ENCODE measurements at regions of chr17 and their contacts with region 1.

Region 1: DNA sequence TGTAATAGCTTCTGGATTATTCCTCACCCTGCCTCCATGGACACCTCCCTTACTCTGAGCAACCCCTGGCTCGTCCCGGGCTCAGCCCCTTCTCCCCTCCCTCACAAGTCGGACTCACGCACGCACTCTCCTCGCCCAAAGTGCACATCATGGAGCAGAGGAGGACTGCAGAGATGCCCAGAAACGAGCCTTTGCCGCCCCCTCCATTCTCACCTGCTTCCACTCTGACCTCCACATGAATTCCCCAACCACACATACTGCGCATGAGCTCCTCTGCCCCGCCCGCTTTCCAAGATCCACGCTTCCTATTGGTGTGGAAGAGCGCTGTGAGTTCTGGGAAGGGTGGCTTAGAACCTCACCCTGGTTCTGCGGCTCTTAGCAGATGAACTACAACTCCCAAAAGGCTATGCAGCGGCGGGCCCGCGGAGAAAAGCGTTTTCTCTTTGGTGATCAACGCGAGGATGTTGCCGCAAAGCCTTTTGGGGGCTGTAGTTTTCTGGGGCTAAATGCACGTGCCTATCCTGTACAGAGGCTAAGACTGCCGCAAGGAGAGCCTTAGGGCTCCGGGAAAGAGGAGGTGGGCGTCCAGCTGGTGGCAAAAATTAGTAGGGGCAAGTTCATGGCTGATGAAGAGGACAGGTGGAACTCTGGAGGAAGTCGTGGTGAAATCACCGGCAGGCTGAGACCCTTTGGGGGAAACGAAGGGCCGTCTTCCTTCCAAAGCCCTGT is at the start of gene PHB1:
- DNase-seq: peak; percentile 75 to 98 (median 93)
- ATAC-seq: peak; percentile 99
- H3K4me3 ChIP-seq: peak within 1 kb of the TSS; percentile 77
- H3K4me3 Mint-ChIP-seq: peak within 1 kb of the TSS; percentile 92 to 99 (median 96)
- H3K27ac ChIP-seq: peak within 1 kb of the TSS; percentile 77
- H3K27ac Mint-ChIP-seq: peak within 1 kb of the TSS; percentile 78 to 99 (median 92)
- H3K4me1 ChIP-seq: peaks cover 8% of the 10 kb centered on the region in 2 donors
- H3K4me1 Mint-ChIP-seq: peaks cover 11 to 30% (median 26%) of the 10 kb centered on the region in 7 donors
- H3K27me3 ChIP-seq: no peaks in the 10 kb centered on the region
- H3K27me3 Mint-ChIP-seq: peaks cover 0 to 3% (median 0%) of the 10 kb centered on the region in 5 donors
- total RNA-seq, gene PHB1: 50.0 to 186 (median 54.4) TPM

Region 2: DNA sequence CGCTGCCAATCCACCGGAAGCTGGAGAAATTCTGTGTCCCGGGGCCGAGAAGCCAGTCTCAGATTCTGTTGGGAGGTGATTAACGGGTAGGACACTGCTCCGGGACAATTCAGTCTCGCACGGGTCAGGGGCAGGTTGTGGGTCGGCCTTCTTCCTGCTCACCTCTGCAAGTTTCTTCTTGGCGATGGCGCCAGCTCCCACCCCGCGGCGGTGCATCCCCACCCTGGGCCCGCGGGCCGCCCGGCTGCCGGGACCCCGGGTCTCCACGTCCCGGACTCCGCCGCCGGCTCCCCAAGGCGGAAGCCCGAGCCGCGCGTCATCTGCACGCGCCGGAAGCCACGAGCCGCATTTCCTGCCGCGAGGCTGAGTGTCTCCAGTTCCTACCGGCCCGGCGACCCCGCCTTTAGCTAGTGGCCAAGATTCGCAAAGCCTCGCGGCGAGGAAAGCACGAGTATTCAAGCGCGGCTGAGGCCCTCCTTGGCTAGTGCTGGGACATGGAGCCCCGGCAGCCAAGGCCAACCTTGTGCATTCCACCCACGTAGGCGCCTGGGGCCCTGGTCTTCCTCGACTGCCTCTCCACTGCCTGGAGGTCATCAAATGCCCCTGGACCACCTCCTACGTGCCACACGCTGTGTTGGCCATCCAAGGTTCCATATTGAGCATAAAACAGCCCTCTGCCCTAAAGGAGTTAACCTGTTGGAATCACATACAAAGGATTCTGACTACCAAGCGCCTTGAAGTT is 470.1 kb before region 1 on chr17 and contains the start of gene SNF8:
- CTCF ChIA-PET with region 1: no interaction called
- POLR2A ChIA-PET with region 1: no interaction called
- intact Hi-C with region 1: no loop called
- DNase-seq: peak; percentile 84 to 96 (median 91)
- ATAC-seq: peak; percentile 97
- H3K4me3 ChIP-seq: peak within 1 kb of the TSS; percentile 100
- H3K4me3 Mint-ChIP-seq: peak within 1 kb of the TSS; percentile 92 to 100 (median 98)
- H3K27ac ChIP-seq: peak within 1 kb of the TSS; percentile 92
- H3K27ac Mint-ChIP-seq: peak within 1 kb of the TSS; percentile 89 to 99 (median 97)
- H3K4me1 ChIP-seq: peaks cover 11 to 14% of the 10 kb centered on the region in 2 donors
- H3K4me1 Mint-ChIP-seq: peaks cover 4 to 32% (median 12%) of the 10 kb centered on the region in 7 donors
- H3K27me3 ChIP-seq: no peaks in the 10 kb centered on the region
- H3K27me3 Mint-ChIP-seq: peaks cover 0 to 9% (median 0%) of the 10 kb centered on the region in 5 donors
- total RNA-seq, gene SNF8: 54.8 to 122 (median 60.3) TPM

Region 3: DNA sequence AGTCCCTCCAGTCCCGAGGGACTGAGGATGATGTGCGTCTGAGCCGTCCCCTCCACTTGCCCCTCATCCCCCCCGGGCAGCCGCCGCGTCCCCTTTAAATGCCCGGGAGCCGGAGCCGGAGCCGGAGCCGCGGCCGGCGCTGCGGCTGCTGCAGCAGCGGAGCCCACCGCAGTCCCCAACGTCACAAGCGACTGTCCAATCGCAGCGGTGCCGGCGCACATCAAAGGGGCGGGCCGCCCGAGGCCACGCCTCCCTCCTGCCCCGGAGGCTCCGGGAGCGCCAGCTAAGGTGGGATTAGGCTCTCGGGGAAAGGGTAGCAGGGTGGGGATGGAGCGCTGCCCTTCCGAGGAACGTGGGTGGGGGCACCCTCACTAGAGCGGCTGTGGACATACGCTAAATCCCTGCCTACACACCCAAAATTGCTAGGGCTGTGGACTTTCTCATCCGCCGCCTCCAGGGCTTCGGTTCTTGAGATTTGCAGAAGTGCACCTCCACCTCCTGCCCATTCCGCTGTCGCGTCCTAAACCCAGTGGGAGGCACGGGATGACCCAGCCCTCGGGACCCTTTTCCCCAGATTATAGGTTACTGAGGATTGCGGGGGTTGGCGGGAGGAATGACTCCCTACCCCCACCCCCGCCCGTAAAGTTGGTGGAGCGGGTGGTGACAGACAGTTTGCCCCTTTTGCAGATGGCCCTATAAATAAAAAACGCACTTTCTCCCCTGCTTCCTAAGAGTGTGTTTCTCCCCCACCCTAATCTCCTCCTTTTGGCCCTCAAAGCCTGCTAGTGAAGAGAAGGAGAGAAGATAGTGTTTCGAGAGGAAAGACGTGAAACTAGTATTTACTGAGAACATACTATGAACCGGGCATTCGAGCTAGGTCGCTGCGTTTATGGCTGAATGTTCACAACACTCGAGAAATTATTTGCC is 183.9 kb before region 1 on chr17 and contains the start of gene PHOSPHO1:
- CTCF ChIA-PET with region 1: no interaction called
- POLR2A ChIA-PET with region 1: no interaction called
- intact Hi-C with region 1: no loop called
- DNase-seq: peak; percentile 70 to 88 (median 83)
- ATAC-seq: peak; percentile 97
- H3K4me3 ChIP-seq: peak within 1 kb of the TSS; percentile 62
- H3K4me3 Mint-ChIP-seq: peak within 1 kb of the TSS; percentile 81 to 94 (median 86)
- H3K27ac ChIP-seq: no peak within 1 kb of the TSS
- H3K27ac Mint-ChIP-seq: peak within 1 kb of the TSS in 7 of 9 donors; percentile 36 to 80 (median 52)
- H3K4me1 ChIP-seq: peaks cover 11 to 12% of the 10 kb centered on the region in 2 donors
- H3K4me1 Mint-ChIP-seq: peaks cover 0 to 26% (median 16%) of the 10 kb centered on the region in 7 donors
- H3K27me3 ChIP-seq: no peaks in the 10 kb centered on the region
- H3K27me3 Mint-ChIP-seq: peaks cover 0 to 43% (median 4%) of the 10 kb centered on the region in 5 donors
- total RNA-seq, gene PHOSPHO1: 0.17 TPM in 1 of 5 experiments, not detected in the others

Region 4: GRCh38 chr17:49496183-49496866 is 81.5 kb after region 1 on chr17:
- CTCF ChIA-PET with region 1: no interaction called
- POLR2A ChIA-PET with region 1: no interaction called
- intact Hi-C with region 1: loop called (anchors 2 to 5 kb)
- DNase-seq: peak; percentile 66 to 93 (median 83)
- ATAC-seq: peak; percentile 89
- H3K4me3 ChIP-seq: peak overlapping the region; percentile 67
- H3K4me3 Mint-ChIP-seq: peak overlapping the region; percentile 60 to 90 (median 80)
- H3K27ac ChIP-seq: no peak overlapping the region
- H3K27ac Mint-ChIP-seq: peak overlapping the region in 1 of 9 donors; percentile 31
- H3K4me1 ChIP-seq: peaks cover 27 to 29% of the 10 kb centered on the region in 2 donors
- H3K4me1 Mint-ChIP-seq: peaks cover 0 to 23% (median 22%) of the 10 kb centered on the region in 7 donors
- H3K27me3 ChIP-seq: peaks cover 5 to 30% of the 10 kb centered on the region in 2 donors
- H3K27me3 Mint-ChIP-seq: peaks cover 29 to 83% (median 34%) of the 10 kb centered on the region in 5 donors

Measured in naive thymus-derived CD4-positive, alpha-beta T cell (primary cell).